OCI-LY7 (cell line): ENCODE measurements at regions of chr1 and their contacts with region 1.

Region 1: GRCh38 chr1:22052115-22053016 is at the start of gene CDC42:
- DNase-seq: peak; percentile 97
- H3K4me3 ChIP-seq: peak within 1 kb of the TSS; percentile 90
- H3K27ac ChIP-seq: peak within 1 kb of the TSS; percentile 70
- H3K4me1 ChIP-seq: peaks cover 42% of the 10 kb centered on the region
- CTCF ChIP-seq: no peak
- total RNA-seq, gene CDC42: 109 and 120 TPM in 2 replicates

Region 2: DNA sequence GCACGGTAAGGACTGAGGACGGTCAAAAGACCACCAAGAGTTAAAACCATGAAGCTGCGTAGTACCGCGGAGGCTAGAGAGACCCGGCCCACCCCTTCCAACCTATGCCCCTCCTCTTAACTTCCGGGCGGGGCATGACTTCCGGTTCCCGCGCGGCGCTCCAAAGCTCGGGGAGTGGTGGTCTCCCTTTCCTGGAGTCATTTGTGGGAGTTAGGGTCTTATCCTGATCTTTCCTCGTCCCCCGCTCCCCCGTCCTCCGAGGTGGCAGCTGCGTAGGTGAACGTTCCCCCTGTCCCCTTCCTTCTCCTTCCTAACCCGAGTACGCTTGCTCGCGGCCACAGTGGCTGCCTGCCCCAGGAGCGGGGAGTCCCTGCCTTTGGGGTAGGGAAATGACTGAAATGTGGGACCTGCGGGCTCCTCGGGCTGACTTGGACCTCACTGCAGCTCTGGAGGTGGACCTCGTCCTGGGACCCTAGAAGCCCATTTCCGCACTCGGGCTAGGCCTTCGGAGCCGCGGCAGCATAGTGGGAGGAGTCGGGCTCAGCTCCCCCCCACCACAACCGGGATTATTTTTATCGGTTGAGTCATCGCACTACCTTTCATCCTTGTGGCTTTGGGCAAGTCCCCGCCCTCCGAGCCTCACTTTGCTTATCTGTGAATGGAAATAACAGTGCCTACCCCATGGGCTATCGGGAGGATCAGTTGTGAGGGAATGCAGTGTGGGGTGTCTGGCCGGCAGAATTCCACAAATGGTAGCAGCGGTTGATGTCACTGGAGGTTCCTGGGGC is 26.8 kb before region 1 on chr1:
- CTCF ChIA-PET with region 1: no interaction called
- POLR2A ChIA-PET with region 1: interaction called, 12 read pairs
- intact Hi-C with region 1: loop called (anchors 1 kb)
- DNase-seq: peak; percentile 92
- H3K4me3 ChIP-seq: peak overlapping the region; percentile 96
- H3K27ac ChIP-seq: peak overlapping the region; percentile 83
- H3K4me1 ChIP-seq: peaks cover 14% of the 10 kb centered on the region
- CTCF ChIP-seq: no peak

Region 3: DNA sequence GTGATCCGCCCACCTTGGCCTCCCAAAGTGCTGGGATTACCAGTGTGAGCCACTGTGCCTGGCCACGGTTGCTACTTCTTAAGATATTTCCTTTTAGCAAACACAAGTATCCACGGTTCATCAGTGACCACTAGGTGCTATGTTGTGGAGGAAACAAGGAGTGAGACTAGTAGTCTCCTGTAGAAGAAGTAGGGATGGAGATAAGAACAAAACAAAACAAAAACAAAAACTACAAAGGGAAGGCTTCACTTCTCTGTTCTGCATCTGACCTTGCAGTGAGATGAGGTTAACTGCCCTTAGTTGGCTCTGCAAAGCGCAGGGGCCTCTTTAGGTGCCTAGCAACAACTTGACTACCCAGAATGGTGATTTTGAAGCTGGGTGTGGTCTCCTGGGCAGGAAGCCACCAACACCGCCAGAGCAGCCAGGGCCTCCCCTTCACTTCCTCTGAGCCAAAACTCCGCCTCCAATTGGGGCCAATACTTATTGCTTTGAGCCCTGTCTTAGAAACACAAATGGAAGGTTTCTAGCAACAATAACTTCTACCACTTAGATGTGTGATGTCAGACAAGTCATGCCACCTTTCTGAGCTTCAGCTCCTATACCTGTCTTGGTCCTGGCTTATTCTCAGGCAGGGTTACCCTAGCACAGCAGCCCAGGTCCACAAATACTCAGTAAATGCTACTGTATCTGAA is 12.6 kb before region 1 on chr1:
- CTCF ChIA-PET with region 1: interaction called, 4 read pairs
- POLR2A ChIA-PET with region 1: interaction called, 32 read pairs
- intact Hi-C with region 1: loop called (anchors 1 kb)
- DNase-seq: peak; percentile 92
- H3K4me3 ChIP-seq: peak overlapping the region; percentile 34
- H3K27ac ChIP-seq: peak overlapping the region; percentile 77
- H3K4me1 ChIP-seq: peaks cover 59% of the 10 kb centered on the region
- CTCF ChIP-seq: peak; percentile 51

Region 4: DNA sequence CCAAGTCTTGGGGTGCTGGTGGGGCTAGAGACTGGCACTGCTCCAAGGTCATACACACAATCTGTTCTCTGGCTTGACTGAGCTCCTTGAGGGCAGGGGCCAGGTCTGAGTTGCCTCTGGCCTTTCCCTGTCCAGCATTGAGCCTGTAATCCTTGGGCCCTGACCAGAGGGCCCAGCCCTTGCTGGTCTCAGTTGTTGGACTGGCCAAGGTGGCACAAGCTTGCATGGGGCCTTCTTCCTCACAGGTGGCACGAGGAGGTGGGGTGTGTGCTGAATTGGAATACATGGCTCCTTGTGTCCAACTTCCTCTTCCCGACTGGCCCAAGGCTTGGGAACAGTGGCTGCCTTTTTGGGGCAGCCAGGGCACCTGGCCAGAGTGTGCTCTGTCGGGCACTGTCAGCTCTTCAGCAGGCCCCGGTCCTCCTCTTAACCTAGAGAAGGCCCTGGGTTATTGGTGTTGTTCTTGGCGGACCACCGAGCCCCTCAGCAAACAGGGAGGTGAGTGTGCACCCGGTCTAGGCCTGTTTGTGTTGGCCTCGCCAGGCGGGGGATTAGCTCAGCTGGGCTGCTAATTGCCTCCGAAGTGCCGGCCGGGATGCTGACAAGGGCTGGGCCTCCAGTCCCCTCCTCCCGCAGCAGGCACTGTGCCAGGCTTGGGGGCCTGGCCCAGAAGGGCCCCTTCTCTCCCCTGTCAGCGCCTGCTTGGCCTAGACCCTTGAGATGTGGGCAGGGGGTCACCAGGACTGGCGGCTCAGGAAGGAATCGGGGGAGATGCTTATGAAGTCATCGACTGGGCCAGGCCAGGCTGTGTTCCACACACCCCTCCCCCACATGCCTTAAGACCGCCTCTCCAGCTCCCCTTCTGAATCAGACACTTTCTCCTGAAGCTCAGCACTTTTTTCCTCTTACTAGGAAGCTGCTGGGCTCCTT is 62.0 kb after region 1 on chr1:
- CTCF ChIA-PET with region 1: no interaction called
- POLR2A ChIA-PET with region 1: no interaction called
- intact Hi-C with region 1: no loop called
- DNase-seq: no peak
- H3K4me3 ChIP-seq: no peak overlapping the region
- H3K27ac ChIP-seq: no peak overlapping the region
- H3K4me1 ChIP-seq: peaks cover 19% of the 10 kb centered on the region
- CTCF ChIP-seq: no peak